Mammary epithelial cell (primary cell): ENCODE measurements at regions of chr14 and their contacts with region 1.

Region 1: GRCh38 chr14:24332268-24332993 is 2.4 kb downstream of the ADCY4 start:
- DNase-seq: peak; percentile 63
- H3K4me3 ChIP-seq: peak overlapping the region in 2 of 3 experiments; percentile 9 to 28
- H3K27ac ChIP-seq: no peak overlapping the region
- H3K4me1 ChIP-seq: peaks cover 22% of the 10 kb centered on the region
- H3K27me3 ChIP-seq: peaks cover 13% of the 10 kb centered on the region
- CTCF ChIP-seq: peak; percentile 74 to 82

Region 2: DNA sequence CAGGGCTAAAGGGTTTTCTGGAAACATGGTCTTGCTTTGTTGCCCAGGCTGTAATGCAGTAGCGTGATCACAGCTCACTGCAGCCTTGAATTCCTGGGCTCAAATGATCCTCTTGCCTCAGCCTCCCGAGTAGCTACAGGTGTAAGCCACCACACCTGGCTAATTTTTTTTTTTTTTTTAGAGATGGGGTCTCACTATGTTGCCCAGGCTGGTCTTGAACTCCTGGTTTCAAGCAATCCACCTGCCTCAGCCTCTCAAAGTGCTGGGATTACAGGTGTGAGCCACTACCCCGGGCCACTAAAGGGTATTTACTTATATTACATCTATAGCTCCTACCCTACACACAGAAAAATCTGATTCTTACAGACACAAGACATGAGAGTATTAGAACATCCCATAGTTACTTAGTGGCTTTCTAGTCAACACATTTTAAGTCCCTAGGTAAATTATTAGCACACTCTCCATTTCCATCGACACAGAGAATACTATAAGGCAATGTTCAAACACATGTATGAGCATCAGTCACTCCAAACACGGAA is 224.0 kb before region 1 on chr14:
- CTCF ChIA-PET with region 1: interaction called, 11 read pairs
- dilution Hi-C with region 1: no loop called
- in situ Hi-C with region 1: no loop called
- intact Hi-C with region 1: no loop called
- DNase-seq: no peak
- H3K4me3 ChIP-seq: no peak overlapping the region
- H3K27ac ChIP-seq: no peak overlapping the region
- H3K4me1 ChIP-seq: peaks cover 21% of the 10 kb centered on the region
- H3K27me3 ChIP-seq: no peaks in the 10 kb centered on the region
- CTCF ChIP-seq: no peak

Region 3: DNA sequence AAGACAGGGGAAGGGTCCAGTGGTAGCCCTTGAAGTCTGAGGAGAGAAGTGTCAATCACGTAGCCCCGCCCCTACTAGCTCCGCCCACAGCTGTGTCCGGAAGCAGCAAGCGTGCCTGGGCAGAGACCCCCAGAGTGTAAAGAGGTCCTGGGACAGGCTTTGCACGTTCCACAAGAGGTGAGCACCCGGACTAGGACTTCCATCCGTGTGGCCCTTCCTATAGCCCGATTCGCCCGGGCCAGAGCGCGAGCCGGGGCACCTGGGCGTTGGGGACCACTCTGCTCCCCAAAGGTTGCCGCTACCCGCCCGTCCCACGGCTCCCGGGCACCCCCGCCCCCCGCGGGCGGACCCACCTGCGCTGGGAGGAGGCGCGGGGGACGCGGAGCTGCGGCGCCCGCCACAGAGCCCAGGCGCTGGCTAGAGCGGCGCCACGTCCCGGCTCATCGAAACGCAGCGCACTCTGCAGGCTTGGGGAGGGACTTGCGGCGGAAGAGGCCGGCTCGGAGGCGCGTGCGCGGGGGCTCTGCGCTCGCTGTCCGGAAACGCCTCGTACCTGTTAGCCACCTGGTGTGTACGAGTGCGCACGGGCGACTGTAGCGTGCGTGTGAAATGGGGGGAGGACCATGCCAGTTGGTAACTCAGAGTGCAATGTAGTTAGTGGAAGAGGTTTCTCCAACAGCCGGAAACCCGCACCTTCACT is 61.1 kb before region 1 on chr14 and contains the start of gene RABGGTA:
- CTCF ChIA-PET with region 1: no interaction called
- dilution Hi-C with region 1: loop called (anchors 5 kb)
- in situ Hi-C with region 1: no loop called
- intact Hi-C with region 1: no loop called
- DNase-seq: peak; percentile 88
- H3K4me3 ChIP-seq: peak within 1 kb of the TSS; percentile 64 to 90 (median 70)
- H3K27ac ChIP-seq: peak within 1 kb of the TSS; percentile 84
- H3K4me1 ChIP-seq: peaks cover 29% of the 10 kb centered on the region
- H3K27me3 ChIP-seq: no peaks in the 10 kb centered on the region
- CTCF ChIP-seq: peak; percentile 55 to 81
- total RNA-seq, gene RABGGTA: 51.3 to 74.5 TPM

Region 4: DNA sequence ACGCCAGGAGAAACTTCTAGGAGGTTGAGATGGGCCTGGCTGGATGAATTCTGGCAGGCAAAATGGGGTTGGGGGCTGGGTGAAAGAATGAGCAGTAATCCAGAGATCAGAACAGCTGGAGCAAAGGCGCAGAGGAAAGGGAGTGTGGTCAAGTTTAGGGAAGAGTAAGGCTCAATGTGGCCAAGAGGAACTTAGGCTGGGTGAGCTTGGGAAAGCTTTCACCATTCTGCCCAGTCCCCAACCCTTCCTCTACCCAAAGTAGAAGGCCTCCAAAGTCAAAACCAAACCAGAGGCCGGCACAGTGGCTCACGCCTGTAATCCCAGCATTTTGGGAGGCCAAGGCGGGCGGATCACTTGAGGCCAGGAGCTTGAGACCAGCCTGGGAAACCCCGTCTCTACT is 50.8 kb before region 1 on chr14:
- CTCF ChIA-PET with region 1: no interaction called
- dilution Hi-C with region 1: no loop called
- in situ Hi-C with region 1: no loop called
- intact Hi-C with region 1: no loop called
- DNase-seq: no peak
- H3K4me3 ChIP-seq: no peak overlapping the region
- H3K27ac ChIP-seq: no peak overlapping the region
- H3K4me1 ChIP-seq: peaks cover 41% of the 10 kb centered on the region
- H3K27me3 ChIP-seq: no peaks in the 10 kb centered on the region
- CTCF ChIP-seq: no peak

Region 5: GRCh38 chr14:24360281-24360680 is 27.9 kb after region 1 on chr14:
- CTCF ChIA-PET with region 1: interaction called, 10 read pairs
- dilution Hi-C with region 1: loop called (anchors 5 kb)
- in situ Hi-C with region 1: no loop called
- intact Hi-C with region 1: loop called (anchors 1 kb)
- DNase-seq: no peak
- H3K4me3 ChIP-seq: no peak overlapping the region
- H3K27ac ChIP-seq: no peak overlapping the region
- H3K4me1 ChIP-seq: peaks cover 4% of the 10 kb centered on the region
- H3K27me3 ChIP-seq: no peaks in the 10 kb centered on the region
- CTCF ChIP-seq: no peak

Region 6: DNA sequence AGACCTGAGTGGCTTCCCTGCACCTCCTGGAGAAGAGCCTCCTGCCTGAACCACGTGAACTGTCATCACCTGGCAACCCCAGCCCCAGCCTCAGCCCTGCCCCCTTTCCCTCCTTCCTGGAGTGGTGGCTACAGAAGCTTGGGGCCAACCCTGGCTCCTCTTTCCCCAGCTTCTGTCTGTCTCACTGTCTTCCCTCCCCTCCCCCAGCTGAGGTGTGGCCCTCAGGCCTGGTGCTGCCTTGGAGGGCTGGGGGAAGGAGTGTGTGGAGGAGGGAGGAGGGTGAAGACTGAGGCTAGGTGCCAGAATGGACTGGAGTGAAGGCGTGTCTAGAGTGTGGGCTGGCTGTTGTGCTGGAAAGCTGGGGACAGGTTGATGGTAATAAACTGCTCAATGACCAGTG is 45.2 kb after region 1 on chr14:
- CTCF ChIA-PET with region 1: no interaction called
- dilution Hi-C with region 1: no loop called
- in situ Hi-C with region 1: no loop called
- intact Hi-C with region 1: no loop called
- DNase-seq: no peak
- H3K4me3 ChIP-seq: no peak overlapping the region
- H3K27ac ChIP-seq: no peak overlapping the region
- H3K4me1 ChIP-seq: no peaks in the 10 kb centered on the region
- H3K27me3 ChIP-seq: no peaks in the 10 kb centered on the region
- CTCF ChIP-seq: no peak

Region 7: GRCh38 chr14:24411443-24412389 is 79.3 kb after region 1 on chr14:
- CTCF ChIA-PET with region 1: interaction called, 4 read pairs
- dilution Hi-C with region 1: loop called (anchors 10 kb)
- in situ Hi-C with region 1: no loop called
- intact Hi-C with region 1: loop called (anchors 1 kb)
- DNase-seq: no peak
- H3K4me3 ChIP-seq: no peak overlapping the region
- H3K27ac ChIP-seq: no peak overlapping the region
- H3K4me1 ChIP-seq: no peaks in the 10 kb centered on the region
- H3K27me3 ChIP-seq: no peaks in the 10 kb centered on the region
- CTCF ChIP-seq: peak; percentile 65 to 74

Region 8: GRCh38 chr14:24678801-24679247 is 346.4 kb after region 1 on chr14:
- CTCF ChIA-PET with region 1: no interaction called
- dilution Hi-C with region 1: no loop called
- in situ Hi-C with region 1: no loop called
- intact Hi-C with region 1: loop called (anchors 2 kb)
- DNase-seq: peak; percentile 76
- H3K4me3 ChIP-seq: peak overlapping the region in 2 of 3 experiments; percentile 26 to 34
- H3K27ac ChIP-seq: peak overlapping the region; percentile 52
- H3K4me1 ChIP-seq: peaks cover 21% of the 10 kb centered on the region
- H3K27me3 ChIP-seq: no peaks in the 10 kb centered on the region
- CTCF ChIP-seq: peak; percentile 97 to 99

Region 9: DNA sequence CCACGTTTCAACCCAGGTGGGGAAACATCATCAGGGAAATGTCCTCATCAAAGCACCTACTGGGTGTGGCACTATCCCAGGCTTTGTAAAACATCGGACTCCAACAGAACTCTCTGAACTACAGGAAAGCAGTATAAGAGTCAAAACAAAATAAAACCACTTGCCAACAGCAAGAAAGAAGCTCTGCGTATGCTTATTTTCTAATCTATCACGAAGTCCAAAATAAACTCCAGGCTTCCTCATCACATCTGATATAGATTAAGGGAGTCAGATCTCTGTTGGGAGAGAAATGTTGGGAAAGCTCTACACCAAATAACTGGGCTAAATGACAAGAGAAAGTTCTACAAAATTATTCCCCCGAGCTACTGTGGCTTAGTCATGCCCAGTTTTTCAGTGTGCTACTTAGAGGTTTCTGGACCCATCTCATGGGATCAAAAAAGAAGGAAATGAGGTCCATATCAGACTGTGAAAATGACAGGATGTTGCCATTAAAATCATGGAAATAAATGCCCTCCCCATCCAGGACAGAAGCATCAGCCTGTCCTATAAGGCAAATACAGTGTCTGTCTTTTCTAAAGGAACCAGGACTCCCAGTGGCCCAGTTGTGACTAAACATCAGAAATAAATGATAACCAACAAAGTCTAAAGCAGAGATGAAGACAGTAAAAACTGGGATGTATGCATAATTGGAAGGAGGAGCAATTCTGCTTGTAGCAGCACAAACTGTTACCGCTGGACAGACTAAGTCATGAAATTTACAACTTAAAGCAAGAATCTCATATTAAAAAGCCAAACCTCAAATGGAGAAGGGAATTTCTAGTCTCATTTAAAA is 568.1 kb after region 1 on chr14:
- CTCF ChIA-PET with region 1: no interaction called
- dilution Hi-C with region 1: no loop called
- in situ Hi-C with region 1: no loop called
- intact Hi-C with region 1: no loop called
- DNase-seq: no peak
- H3K4me3 ChIP-seq: no peak overlapping the region
- H3K27ac ChIP-seq: no peak overlapping the region
- H3K4me1 ChIP-seq: no peaks in the 10 kb centered on the region
- H3K27me3 ChIP-seq: no peaks in the 10 kb centered on the region
- CTCF ChIP-seq: no peak